Aorta (tissue), 5 donors: ENCODE measurements at regions of chr2 and their contacts with region 1.

Region 1: DNA sequence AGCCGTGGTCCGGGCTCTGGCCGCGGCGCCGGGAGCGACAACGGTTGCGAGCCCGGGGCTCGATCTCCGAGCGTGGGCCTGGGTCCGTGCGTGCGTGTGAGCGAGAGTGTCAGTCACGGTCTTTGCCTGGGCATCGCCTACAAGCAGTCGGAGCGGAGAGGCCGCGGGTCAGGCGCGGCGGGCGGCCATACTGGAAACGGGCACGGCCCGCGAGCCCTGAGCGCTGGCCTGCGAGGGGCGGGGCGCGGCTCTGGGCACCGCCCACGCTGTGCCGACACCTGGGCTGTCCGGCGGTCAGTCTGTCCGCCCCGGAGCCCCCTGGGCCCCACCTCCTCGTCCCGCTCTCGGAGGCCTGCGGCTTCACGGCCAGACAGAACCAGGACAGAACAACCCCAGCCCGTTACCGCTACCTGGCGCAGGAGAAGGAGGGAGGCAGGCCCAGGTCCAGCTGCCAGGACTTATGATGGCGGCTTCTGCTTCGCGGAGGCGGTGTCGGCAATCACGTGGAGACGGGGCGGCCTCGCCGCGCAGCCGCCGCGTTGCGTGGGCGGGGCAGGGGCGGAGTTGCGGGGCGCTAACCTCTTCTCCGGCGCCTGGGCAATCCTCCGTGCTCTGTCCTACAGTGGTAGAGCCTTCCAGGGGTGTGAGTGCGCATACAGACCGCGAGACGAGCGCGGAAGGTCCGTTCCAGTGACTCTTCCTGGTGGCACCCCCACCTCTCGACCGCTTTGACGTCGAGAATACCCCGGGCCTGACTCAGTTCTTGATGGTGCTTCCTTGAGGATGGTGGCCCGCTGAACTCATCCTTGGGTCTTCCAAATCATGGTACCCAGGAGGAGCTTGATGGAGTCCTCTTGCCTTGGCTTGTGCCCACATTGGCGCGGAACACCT is at the start of gene TMEM131:
- DNase-seq: peak; percentile 97 to 98
- ATAC-seq: peak; percentile 99
- H3K4me3 ChIP-seq: peak within 1 kb of the TSS; percentile 82 to 86
- H3K27ac ChIP-seq: peak within 1 kb of the TSS; percentile 84 to 97
- H3K4me1 ChIP-seq: peaks cover 0 to 3% of the 10 kb centered on the region in 2 donors
- H3K27me3 ChIP-seq: no peaks in the 10 kb centered on the region
- total RNA-seq, gene TMEM131: 37.7 to 42.5 TPM

Region 2: GRCh38 chr2:97806738-97807618 is 189.0 kb before region 1 on chr2:
- intact Hi-C with region 1: loop called (anchors 10 kb)
- DNase-seq: peak; percentile 89 to 93
- ATAC-seq: peak; percentile 91
- H3K4me3 ChIP-seq: no peak overlapping the region
- H3K27ac ChIP-seq: no peak overlapping the region
- H3K4me1 ChIP-seq: no peaks in the 10 kb centered on the region
- H3K27me3 ChIP-seq: no peaks in the 10 kb centered on the region

Region 3: GRCh38 chr2:97834610-97835009 is 161.4 kb before region 1 on chr2:
- intact Hi-C with region 1: loop called in 1 of 2 experiments (anchors 10 kb)
- DNase-seq: no peak
- ATAC-seq: no peak
- H3K4me3 ChIP-seq: no peak overlapping the region
- H3K27ac ChIP-seq: no peak overlapping the region
- H3K4me1 ChIP-seq: peaks cover 0 to under 1% of the 10 kb centered on the region in 2 donors
- H3K27me3 ChIP-seq: no peaks in the 10 kb centered on the region

Region 4: DNA sequence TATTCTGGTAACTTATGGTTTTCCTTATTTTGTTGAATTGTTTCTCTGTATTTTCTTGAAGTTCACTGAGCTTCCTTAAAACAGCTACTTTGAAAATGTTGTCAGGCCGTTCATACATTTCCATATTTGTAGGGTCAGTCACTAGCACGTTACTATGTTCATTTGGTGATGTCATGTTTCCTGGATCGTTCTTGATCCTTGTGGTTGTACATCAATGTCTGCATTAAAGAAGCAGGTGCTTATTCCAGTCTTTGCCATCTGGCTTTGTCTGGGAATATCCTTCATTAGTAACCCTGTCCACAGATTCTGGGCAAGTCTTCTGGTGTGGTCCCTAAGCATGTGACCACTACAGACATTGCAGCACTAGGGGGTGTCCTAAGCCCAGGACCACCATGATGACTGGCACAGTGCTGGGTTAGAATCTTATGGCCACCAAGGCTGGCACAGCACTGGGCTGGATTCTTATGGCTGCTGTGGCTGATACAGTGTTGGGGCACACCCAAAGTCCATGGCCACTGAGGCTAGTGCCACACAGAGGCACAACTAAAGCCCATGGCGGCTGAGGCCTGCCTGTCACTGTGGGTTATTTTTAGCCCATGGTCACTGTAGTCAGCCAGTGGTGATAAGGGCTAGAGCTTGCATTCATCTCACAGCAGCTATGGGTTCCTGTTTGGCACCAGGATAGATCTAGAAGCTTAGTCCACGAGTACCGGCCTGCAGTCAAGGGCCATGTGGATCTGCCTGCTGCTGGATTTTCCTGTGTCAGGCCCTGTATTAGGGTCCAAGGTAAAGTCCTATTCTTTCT is 104.2 kb after region 1 on chr2:
- intact Hi-C with region 1: no loop called
- DNase-seq: no peak
- ATAC-seq: no peak
- H3K4me3 ChIP-seq: no peak overlapping the region
- H3K27ac ChIP-seq: no peak overlapping the region
- H3K4me1 ChIP-seq: no peaks in the 10 kb centered on the region
- H3K27me3 ChIP-seq: no peaks in the 10 kb centered on the region

Region 5: DNA sequence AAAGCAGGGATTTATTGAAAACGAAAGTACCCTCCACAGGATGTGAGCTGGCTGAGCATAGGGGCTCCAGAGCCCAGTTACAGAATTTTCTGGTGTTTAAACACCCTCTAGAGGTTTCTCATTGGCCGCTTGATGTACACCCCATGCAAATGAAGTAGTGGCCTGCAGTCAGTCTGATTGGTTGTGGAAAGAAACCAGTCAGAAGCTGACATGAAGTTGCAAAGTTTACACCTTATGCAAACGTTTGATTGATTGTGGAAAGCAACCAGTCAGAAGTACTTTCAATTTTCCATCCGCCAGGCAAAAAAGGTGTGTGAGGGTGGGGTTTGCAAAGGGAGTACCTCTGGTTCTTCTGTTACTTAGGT is 153.3 kb after region 1 on chr2:
- intact Hi-C with region 1: loop called in 1 of 2 experiments (anchors 10 kb)
- DNase-seq: no peak
- ATAC-seq: peak; percentile 57
- H3K4me3 ChIP-seq: peak overlapping the region; percentile 1 to 33
- H3K27ac ChIP-seq: peak overlapping the region in 1 of 2 donors; percentile 64
- H3K4me1 ChIP-seq: peaks cover 0 to 3% of the 10 kb centered on the region in 2 donors
- H3K27me3 ChIP-seq: no peaks in the 10 kb centered on the region

Region 6: DNA sequence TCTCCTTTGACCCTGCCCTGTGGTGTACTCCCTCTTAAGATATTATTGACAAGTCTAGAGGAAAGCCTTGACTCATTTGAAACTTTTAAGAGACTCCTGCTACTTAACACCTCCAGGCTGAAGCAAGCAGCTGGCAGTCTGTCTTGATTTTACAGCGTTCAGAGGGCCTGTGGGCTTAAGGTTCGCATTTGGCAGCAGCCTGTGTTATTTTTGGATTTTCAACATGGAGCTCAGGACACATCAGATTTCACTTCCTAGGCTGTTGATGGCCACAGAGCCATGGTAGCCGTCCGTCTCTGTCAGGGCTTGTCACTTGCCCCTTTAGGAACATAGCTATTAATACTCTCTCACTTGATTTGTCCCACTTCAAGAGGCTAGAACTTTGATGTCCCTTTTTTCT is 164.6 kb after region 1 on chr2:
- intact Hi-C with region 1: loop called in 1 of 2 experiments (anchors 5 kb)
- DNase-seq: no peak
- ATAC-seq: no peak
- H3K4me3 ChIP-seq: no peak overlapping the region
- H3K27ac ChIP-seq: peak overlapping the region; percentile 18 to 88
- H3K4me1 ChIP-seq: peaks cover 0 to 5% of the 10 kb centered on the region in 2 donors
- H3K27me3 ChIP-seq: no peaks in the 10 kb centered on the region